K562 (cell line): ENCODE measurements at regions of chr9 and their contacts with region 1.

Region 1: GRCh38 chr9:32384364-32385151 is at the start of gene ACO1:
- DNase-seq: peak; percentile 86 to 97 (median 96)
- ATAC-seq: peak; percentile 98
- H3K4me3 ChIP-seq: peak within 1 kb of the TSS; percentile 84
- H3K27ac ChIP-seq: peak within 1 kb of the TSS; percentile 59
- H3K4me1 ChIP-seq: peaks cover 0 to 4% of the 10 kb centered on the region in 2 experiments; a peak in 3 of 5 replicates
- H3K27me3 ChIP-seq: no peaks in the 10 kb centered on the region
- CTCF ChIP-seq: peak in 2 of 3 experiments; percentile 23 to 30; a peak in 3 of 6 replicates
- EP300 ChIP-seq: no peak
- POLR2A ChIP-seq: peak; percentile 61
- RAD21 ChIP-seq: no peak
- polyA plus RNA-seq, gene ACO1: 0.96 to 3.0 TPM

Region 2: DNA sequence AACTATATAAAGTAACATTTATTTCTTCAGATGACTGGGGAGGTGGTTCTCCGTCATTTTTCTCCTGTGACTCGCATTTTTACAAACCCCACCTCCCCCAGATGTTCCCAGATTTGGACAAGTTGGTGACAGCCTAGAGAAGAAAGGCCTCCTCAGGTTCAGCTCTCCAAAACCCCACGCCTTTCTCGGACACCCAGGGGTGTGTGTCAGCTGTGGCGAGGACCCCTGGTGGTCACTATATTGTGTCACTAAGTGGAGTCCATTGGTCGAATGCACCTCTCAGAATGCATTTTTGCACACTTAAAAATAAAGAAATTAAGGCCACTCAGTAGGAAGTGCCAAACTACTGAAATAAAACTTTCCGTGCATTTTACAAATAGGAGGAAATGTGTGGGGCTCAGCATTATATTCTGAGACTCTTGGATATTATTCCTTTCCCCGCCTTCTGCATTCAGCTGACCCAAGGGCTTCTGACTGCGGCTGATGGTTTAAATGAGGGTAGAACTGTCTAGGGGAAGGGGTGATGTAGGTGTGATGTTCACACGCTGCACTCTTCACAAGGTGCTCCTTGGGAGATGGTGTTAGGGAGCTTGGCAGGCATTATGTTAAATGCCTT is 47.5 kb after region 1 on chr9:
- CTCF ChIA-PET with region 1: interaction called, 3 read pairs
- POLR2A ChIA-PET with region 1: no interaction called
- in situ Hi-C with region 1: no loop called
- intact Hi-C with region 1: loop called (anchors 2 kb)
- DNase-seq: peak; percentile 24 to 50 (median 44)
- ATAC-seq: peak; percentile 86
- H3K4me3 ChIP-seq: no peak overlapping the region
- H3K27ac ChIP-seq: no peak overlapping the region
- H3K4me1 ChIP-seq: peaks cover 0 to 5% of the 10 kb centered on the region in 2 experiments; a peak in 2 of 5 replicates
- H3K27me3 ChIP-seq: no peaks in the 10 kb centered on the region
- CTCF ChIP-seq: peak; percentile 50 to 61 (median 53)
- EP300 ChIP-seq: no peak
- POLR2A ChIP-seq: no peak
- RAD21 ChIP-seq: peak in 1 of 2 experiments; percentile 34; a peak in 2 of 4 replicates

Region 3: DNA sequence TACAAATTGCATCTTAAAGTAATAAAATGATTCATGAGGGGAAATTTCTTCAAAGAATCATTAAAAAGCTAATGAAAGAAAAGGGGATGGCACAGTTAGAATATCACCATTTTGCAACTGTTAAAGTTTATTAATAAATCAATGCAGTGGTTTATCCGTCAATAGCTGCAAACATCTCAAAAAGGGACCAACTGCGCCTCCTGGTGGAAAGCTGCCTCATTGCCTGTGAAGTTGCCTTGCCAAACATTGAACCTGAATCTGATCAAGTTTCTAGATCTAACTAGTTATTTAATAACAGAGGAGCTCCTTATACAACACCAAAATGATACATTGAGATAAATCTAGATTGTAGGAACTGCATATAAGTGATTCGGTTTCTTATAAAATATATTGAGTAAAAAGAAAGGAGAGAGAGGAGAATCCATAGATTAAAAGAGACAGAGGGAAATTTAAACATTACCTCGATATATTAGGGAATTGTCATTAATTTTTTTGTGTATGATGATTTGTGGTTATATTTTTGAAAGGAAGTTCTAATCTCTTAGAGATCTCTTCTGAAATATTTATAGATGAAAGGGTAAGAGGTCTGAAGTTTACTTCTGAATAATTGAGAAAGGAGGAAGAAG is 195.3 kb after region 1 on chr9:
- CTCF ChIA-PET with region 1: interaction called, 93 read pairs
- POLR2A ChIA-PET with region 1: interaction called, 5 read pairs
- in situ Hi-C with region 1: loop called (anchors 5 kb)
- intact Hi-C with region 1: loop called (anchors 1 kb)
- DNase-seq: peak; percentile 27 to 60 (median 40)
- ATAC-seq: peak; percentile 59; the same call in 1 of the 3 replicates
- H3K4me3 ChIP-seq: no peak overlapping the region
- H3K27ac ChIP-seq: no peak overlapping the region
- H3K4me1 ChIP-seq: no peaks in the 10 kb centered on the region; a peak in 1 of 5 replicates
- H3K27me3 ChIP-seq: no peaks in the 10 kb centered on the region
- CTCF ChIP-seq: peak; percentile 71 to 84 (median 75)
- EP300 ChIP-seq: no peak
- POLR2A ChIP-seq: no peak
- RAD21 ChIP-seq: peak; percentile 60 to 85

Region 4: DNA sequence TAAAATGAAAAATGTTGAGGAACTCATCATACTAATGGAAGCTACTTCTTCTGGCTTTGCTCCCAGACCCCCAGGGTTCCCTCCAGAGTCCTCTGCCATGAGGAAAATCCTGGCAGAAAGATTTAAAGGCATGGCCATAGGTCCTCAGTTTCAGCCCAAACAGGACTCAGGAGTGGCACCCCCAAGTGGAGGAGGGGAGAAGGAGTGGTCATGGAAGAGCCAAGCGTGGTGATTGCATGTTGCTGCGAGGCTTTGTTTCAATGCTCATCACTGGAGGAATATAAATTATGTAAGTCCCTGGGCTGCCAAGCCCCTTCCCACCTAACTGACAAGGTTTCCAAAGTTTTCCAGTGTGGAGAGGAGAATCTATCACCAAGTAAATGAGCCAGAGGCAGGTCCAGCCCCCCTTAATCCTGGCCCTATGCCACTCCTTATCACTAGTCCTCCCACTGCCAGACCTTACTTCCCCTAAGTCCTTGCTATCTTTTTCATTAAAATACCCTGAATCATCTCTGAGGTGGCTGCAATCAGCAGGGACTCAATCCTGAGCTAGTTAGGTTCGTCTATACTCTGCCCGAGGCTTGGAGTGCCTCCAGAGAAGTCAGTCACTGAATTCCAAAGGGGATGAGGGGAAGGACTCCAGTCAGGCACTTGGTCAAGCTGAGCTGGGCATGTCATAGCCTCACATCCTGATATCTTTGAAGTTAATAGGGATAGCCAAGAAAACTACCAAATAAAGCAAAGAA is 321.6 kb after region 1 on chr9:
- CTCF ChIA-PET with region 1: no interaction called
- POLR2A ChIA-PET with region 1: no interaction called
- in situ Hi-C with region 1: no loop called
- intact Hi-C with region 1: no loop called
- DNase-seq: no peak
- ATAC-seq: peak; percentile 37; the same call in 1 of the 3 replicates
- H3K4me3 ChIP-seq: no peak overlapping the region
- H3K27ac ChIP-seq: no peak overlapping the region
- H3K4me1 ChIP-seq: no peaks in the 10 kb centered on the region; a peak in 3 of 5 replicates
- H3K27me3 ChIP-seq: no peaks in the 10 kb centered on the region
- CTCF ChIP-seq: no peak
- EP300 ChIP-seq: no peak
- POLR2A ChIP-seq: no peak
- RAD21 ChIP-seq: no peak